ENCODE measurements at regions of chr12 and their contacts with region 1.

Region 1: DNA sequence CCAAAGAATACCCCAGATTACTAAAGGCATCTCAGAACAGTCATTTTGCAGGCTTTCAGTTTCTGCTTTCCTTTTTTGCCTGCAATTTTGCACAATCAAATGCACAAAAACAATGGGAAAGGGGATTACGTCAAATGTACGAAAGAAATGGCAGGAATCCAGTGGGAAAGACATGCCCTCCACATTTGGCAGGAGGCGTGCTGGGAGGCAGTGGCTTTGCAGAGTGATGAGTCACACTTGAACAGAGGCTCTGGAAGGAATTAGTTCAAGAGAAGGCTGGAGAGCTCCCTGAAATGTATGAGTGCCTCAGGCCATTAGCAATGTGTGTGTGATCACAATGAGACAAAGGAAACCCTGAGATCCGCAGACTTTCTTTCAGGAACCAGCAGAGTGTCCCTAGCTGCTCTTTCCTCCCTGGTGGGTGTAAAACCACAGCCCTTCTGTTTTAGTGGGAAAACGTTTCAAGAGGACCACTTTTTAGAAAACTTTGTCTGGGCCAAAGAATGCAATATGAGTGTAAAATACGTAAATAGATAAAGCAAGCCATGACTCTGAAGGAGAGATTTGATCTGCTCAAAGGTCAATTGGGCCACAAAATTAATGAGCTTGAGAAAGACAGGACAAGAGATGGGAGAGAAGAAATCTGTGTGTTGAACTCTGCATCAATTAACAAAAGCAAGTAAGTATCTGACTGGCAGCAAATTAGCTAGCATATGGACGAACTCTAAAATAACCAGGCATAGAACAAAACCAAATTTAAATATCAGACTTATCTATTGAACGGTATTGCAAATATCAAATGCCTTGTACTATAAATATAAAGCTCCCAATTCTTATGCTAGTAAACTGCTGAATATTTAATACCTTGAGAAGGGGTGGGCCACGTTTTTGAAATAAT is 155.4 kb upstream of the PDE3A start:
- DNase-seq: peak; percentile 85
- ATAC-seq: peak; percentile 98

Region 2: DNA sequence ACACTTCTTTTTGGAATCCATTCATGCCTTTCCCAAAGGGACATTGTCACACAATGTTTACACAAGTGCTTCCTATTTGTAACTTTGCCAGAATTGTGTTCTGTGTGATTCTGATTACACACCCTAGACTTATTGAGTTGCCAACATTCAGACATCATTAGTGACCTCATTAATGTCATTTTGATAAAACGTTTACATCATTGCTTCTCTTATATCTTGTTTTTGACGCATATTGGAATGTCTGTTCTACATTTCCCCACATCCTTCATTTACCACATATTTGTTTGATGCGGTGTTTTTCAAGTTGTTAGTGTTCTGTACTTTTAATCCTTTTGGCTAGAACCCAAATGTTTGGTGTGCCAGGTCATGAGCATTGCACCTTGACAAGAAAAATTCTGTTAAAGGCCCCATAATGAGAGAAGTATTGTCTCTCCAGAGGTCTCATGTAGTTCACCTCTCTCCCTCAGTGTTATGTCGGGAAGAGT is 468.1 kb before region 1 on chr12:
- intact Hi-C with region 1: loop called (anchors 5 kb)
- DNase-seq: no peak
- ATAC-seq: peak; percentile 80

Region 3: GRCh38 chr12:19915392-19916195 is 297.3 kb before region 1 on chr12:
- intact Hi-C with region 1: loop called (anchors 10 kb)
- DNase-seq: no peak
- ATAC-seq: peak; percentile 70

Region 4: DNA sequence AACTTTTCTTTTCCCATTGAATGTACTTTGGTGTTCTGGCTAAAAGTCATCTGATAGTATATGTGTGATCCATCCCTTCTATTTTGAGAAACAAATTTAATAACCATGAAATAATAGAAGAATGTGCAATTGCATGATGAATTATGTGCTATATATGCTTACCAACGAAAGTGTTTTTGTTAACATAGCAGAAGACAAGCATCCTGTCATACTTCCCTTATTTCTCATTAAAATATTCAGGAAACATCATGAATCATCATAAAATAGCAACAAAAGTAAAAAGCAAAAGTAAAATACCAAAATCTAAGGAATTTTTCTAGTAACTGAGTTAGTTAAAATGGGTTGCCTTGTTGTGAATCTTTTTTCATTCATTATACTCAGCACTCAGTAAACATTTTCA is 253.6 kb before region 1 on chr12:
- intact Hi-C with region 1: loop called (anchors 2 kb)
- DNase-seq: no peak
- ATAC-seq: no peak

Region 5: DNA sequence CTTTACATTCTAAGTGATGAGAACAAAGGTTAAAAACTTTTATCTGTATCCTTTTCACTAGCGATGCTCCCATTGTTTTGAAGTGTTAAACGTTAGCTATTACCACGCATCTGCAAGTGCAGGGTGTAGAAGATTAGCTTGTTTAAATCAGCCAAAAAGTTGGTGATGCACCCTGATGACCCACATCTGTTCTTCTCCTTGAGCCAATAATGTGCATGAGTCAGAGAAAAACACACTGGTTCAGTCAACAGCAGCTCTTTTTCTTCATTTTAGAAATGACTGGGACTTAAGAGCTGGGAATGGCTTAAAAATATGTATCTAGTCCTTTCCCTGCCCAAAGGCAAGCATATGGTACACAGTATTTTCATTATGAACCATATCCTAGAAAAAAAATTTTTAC is 168.1 kb before region 1 on chr12:
- intact Hi-C with region 1: loop called (anchors 5 kb)
- DNase-seq: no peak
- ATAC-seq: peak; percentile 86

Region 6: GRCh38 chr12:20174528-20175175 is 38.3 kb before region 1 on chr12:
- intact Hi-C with region 1: no loop called
- DNase-seq: no peak
- ATAC-seq: no peak